Activated naive CD4-positive, alpha-beta T cell treated with anti-CD3 and anti-CD28 coated beads, Interleukin-2, amount 10 ng/mL, durations not matched to agents 7 days and 5 days (primary cell): ENCODE measurements at regions of chr5 and their contacts with region 1.

Region 1: DNA sequence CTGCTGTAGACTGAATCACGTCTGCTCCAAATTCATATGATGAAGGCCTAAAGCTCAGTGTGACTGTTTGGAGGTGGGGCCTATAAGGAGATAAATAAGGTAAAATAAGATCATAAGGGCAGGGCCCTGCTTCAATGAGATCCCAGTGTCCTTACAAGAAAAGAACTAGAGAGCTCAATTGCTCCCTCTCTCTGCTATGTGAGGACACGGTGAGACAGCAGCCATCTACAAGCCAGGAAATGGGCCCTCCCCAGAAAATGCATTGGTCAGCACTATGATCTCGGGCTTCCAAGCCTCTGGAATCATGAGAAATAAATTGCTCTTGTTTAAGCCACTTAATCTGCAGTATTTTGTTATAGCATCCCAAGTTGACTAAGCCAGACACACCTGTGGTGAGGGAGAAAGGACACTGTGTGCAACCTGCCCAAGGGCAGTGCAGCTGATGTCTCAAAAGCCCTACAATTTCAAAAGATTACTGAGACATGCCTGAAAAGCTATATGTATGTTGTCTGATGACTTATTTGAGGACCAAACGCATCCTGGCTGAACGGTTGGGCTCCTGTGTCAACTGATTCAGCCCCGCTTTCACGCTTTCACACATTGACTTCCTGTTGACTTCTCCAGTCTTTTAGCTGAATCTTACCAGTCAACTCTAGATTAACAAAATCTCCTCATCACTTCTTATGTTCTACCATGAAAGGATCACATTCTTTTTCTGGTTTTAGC is 13.2 kb downstream of the GZMK start:
- DNase-seq: peak; percentile 82
- H3K4me3 Mint-ChIP-seq: no peak overlapping the region
- H3K27ac Mint-ChIP-seq: peak overlapping the region; percentile 99
- H3K4me1 Mint-ChIP-seq: peaks cover 46% of the 10 kb centered on the region
- H3K27me3 Mint-ChIP-seq: no peaks in the 10 kb centered on the region

Region 2: GRCh38 chr5:55052383-55052931 is 15.2 kb after region 1 on chr5:
- CTCF ChIA-PET with region 1: interaction called, 10 read pairs
- DNase-seq: no peak
- H3K4me3 Mint-ChIP-seq: no peak overlapping the region
- H3K27ac Mint-ChIP-seq: no peak overlapping the region
- H3K4me1 Mint-ChIP-seq: peaks cover 19% of the 10 kb centered on the region
- H3K27me3 Mint-ChIP-seq: no peaks in the 10 kb centered on the region

Region 3: GRCh38 chr5:55062039-55062779 is 25.0 kb after region 1 on chr5:
- CTCF ChIA-PET with region 1: interaction called, 17 read pairs
- DNase-seq: peak; percentile 88
- H3K4me3 Mint-ChIP-seq: peak overlapping the region; percentile 60
- H3K27ac Mint-ChIP-seq: peak overlapping the region; percentile 97
- H3K4me1 Mint-ChIP-seq: peaks cover 80% of the 10 kb centered on the region
- H3K27me3 Mint-ChIP-seq: peaks cover 4% of the 10 kb centered on the region

Region 4: GRCh38 chr5:55072666-55073065 is 35.5 kb after region 1 on chr5:
- CTCF ChIA-PET with region 1: interaction called, 13 read pairs
- DNase-seq: no peak
- H3K4me3 Mint-ChIP-seq: peak overlapping the region; percentile 38
- H3K27ac Mint-ChIP-seq: peak overlapping the region; percentile 93
- H3K4me1 Mint-ChIP-seq: peaks cover 58% of the 10 kb centered on the region
- H3K27me3 Mint-ChIP-seq: peaks cover 4% of the 10 kb centered on the region

Region 5: DNA sequence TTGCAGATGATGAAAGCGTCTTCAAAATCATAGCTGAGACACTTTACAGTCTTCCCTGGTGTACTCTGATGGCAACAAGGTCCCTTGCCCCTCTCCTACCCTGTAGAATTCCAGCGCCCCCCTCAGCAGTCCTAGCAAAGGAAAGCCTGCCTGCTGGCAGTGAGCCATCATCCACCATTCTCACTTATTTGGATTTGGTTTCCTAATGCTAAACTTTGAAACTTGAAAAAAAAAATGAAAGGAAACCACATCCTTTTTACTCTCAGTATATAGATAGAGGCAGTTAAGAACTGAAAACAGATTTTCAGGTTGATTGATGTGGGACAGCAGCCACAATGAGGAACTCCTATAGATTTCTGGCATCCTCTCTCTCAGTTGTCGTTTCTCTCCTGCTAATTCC is 65.1 kb after region 1 on chr5 and contains the start of gene GZMA:
- CTCF ChIA-PET with region 1: interaction called, 19 read pairs
- DNase-seq: peak; percentile 70
- H3K4me3 Mint-ChIP-seq: peak within 1 kb of the TSS; percentile 77
- H3K27ac Mint-ChIP-seq: peak within 1 kb of the TSS; percentile 96
- H3K4me1 Mint-ChIP-seq: peaks cover 88% of the 10 kb centered on the region
- H3K27me3 Mint-ChIP-seq: no peaks in the 10 kb centered on the region

Region 6: GRCh38 chr5:55123365-55123764 is 86.2 kb after region 1 on chr5:
- CTCF ChIA-PET with region 1: no interaction called
- DNase-seq: no peak
- H3K4me3 Mint-ChIP-seq: no peak overlapping the region
- H3K27ac Mint-ChIP-seq: no peak overlapping the region
- H3K4me1 Mint-ChIP-seq: no peaks in the 10 kb centered on the region
- H3K27me3 Mint-ChIP-seq: peaks cover 10% of the 10 kb centered on the region